ENCODE measurements at regions of chr7 and their contacts with region 1.

Region 1: DNA sequence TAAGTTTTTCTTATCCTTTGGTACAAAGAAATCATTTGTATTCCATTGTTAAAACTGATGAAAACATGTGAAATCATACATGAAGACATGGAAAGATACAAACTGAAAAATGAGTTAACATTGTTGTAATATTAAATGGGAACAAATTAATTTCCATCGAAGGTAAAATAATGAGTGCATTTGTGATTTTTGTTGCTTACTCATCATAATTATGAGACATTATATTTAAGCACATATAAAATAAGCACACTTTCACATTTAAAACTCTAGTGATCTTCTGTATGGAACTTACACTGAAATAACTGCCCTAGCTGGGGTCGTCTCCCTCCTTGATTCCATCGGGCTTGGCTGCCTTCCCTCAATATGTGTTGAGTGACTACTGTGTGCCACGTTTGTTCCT is 204.2 kb upstream of the PRPS1L1 start:
- DNase-seq: no peak
- H3K4me3 Mint-ChIP-seq: no peak overlapping the region
- H3K27ac Mint-ChIP-seq: no peak overlapping the region
- H3K4me1 Mint-ChIP-seq: no peaks in the 10 kb centered on the region
- H3K27me3 Mint-ChIP-seq: no peaks in the 10 kb centered on the region

Region 2: GRCh38 chr7:17523813-17524741 is 707.8 kb before region 1 on chr7:
- CTCF ChIA-PET with region 1: no interaction called
- POLR2A ChIA-PET with region 1: interaction called, 11 read pairs
- DNase-seq: no peak
- H3K4me3 Mint-ChIP-seq: no peak overlapping the region
- H3K27ac Mint-ChIP-seq: no peak overlapping the region
- H3K4me1 Mint-ChIP-seq: peaks cover 18% of the 10 kb centered on the region
- H3K27me3 Mint-ChIP-seq: peaks cover 7% of the 10 kb centered on the region